Transverse colon (tissue), 4 donors: ENCODE measurements at regions of chr10 and their contacts with region 1.

Region 1: GRCh38 chr10:69075431-69075830 is 12.5 kb upstream of the SRGN start:
- DNase-seq: no peak
- H3K4me3 ChIP-seq: no peak overlapping the region
- H3K27ac ChIP-seq: no peak overlapping the region
- H3K4me1 ChIP-seq: no peaks in the 10 kb centered on the region
- H3K27me3 ChIP-seq: no peaks in the 10 kb centered on the region
- CTCF ChIP-seq: no peak
- EP300 ChIP-seq: no peak
- POLR2A ChIP-seq: no peak

Region 2: DNA sequence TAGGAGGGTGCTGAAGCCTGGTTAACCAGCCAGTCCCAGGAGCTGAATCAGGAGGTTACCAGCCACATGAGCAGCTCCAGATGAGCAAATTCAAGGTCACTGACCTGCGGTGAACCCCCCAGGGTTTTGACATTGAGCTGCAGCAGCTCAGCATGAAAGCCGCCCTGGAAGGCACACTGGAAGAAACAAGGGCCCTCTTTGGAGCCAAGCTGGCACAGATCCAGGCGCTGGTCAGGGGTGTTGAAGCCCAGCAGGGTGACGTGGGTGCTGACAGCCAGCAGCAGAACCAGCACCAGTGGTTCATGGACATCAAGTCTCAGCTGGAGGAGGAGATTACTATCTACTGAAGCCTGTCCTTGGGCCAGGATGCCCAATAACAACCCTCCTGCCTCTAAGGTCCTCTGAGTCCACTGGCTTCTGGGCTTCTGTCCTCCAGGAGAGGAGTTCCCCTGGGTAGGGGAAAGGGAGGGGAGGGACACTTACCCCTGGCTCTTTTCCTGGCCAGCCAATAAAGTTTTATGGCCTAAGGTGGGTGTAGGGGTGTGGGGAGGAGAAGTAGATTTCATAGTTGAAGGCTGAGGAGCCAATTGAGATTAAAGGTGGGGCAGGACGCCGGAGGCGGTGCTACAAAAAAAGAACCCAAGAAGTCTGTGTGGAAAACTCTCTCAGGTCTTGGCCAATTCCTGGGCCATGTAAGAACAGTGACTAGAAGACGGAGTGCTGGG is 814.1 kb before region 1 on chr10:
- in situ Hi-C with region 1: no loop called
- intact Hi-C with region 1: loop called (anchors 5 kb)
- DNase-seq: peak; percentile 9
- H3K4me3 ChIP-seq: no peak overlapping the region
- H3K27ac ChIP-seq: no peak overlapping the region
- H3K4me1 ChIP-seq: peaks cover 0 to 6% (median 0%) of the 10 kb centered on the region in 4 donors
- H3K27me3 ChIP-seq: no peaks in the 10 kb centered on the region
- CTCF ChIP-seq: no peak
- EP300 ChIP-seq: no peak
- POLR2A ChIP-seq: no peak

Region 3: GRCh38 chr10:70106958-70107791 is 1031.7 kb after region 1 on chr10:
- in situ Hi-C with region 1: no loop called
- intact Hi-C with region 1: no loop called
- DNase-seq: no peak
- H3K4me3 ChIP-seq: no peak overlapping the region
- H3K27ac ChIP-seq: no peak overlapping the region
- H3K4me1 ChIP-seq: no peaks in the 10 kb centered on the region
- H3K27me3 ChIP-seq: no peaks in the 10 kb centered on the region
- CTCF ChIP-seq: peak in 4 of 5 experiments; percentile 11 to 28 (median 16)
- EP300 ChIP-seq: no peak
- POLR2A ChIP-seq: no peak